Activated CD8-positive, alpha-beta T cell treated with anti-CD3 and anti-CD28 coated beads for 36 hours (primary cell): ENCODE measurements at regions of chr16 and their contacts with region 1.

Region 1: GRCh38 chr16:2023098-2023925 is 3.4 kb upstream of the NHERF2 start:
- DNase-seq: peak; percentile 95
- ATAC-seq: peak; percentile 89
- H3K4me3 Mint-ChIP-seq: peak overlapping the region; percentile 49
- H3K27ac Mint-ChIP-seq: no peak overlapping the region
- H3K4me1 Mint-ChIP-seq: peaks cover 24% of the 10 kb centered on the region
- H3K27me3 Mint-ChIP-seq: peaks cover 29% of the 10 kb centered on the region
- CTCF ChIP-seq: peak; percentile 97

Region 2: GRCh38 chr16:1923299-1924034 is 99.8 kb before region 1 on chr16:
- CTCF ChIA-PET with region 1: no interaction called
- POLR2A ChIA-PET with region 1: no interaction called
- intact Hi-C with region 1: no loop called
- DNase-seq: peak; percentile 43
- ATAC-seq: peak; percentile 43
- H3K4me3 Mint-ChIP-seq: no peak overlapping the region
- H3K27ac Mint-ChIP-seq: no peak overlapping the region
- H3K4me1 Mint-ChIP-seq: no peaks in the 10 kb centered on the region
- H3K27me3 Mint-ChIP-seq: peaks cover 31% of the 10 kb centered on the region
- CTCF ChIP-seq: peak; percentile 49

Region 3: GRCh38 chr16:2047330-2048115 is 24.2 kb after region 1 on chr16 and contains the starts of genes NTHL1 and TSC2:
- CTCF ChIA-PET with region 1: interaction called, 15 read pairs
- POLR2A ChIA-PET with region 1: interaction called, 5 read pairs
- intact Hi-C with region 1: no loop called
- DNase-seq: peak; percentile 97
- ATAC-seq: peak; percentile 97
- H3K4me3 Mint-ChIP-seq: peak within 1 kb of the TSS; percentile 93
- H3K27ac Mint-ChIP-seq: peak within 1 kb of the TSS; percentile 70
- H3K4me1 Mint-ChIP-seq: peaks cover 22% of the 10 kb centered on the region
- H3K27me3 Mint-ChIP-seq: no peaks in the 10 kb centered on the region
- CTCF ChIP-seq: peak; percentile 33
- total RNA-seq, gene NTHL1: 28.2 to 29.8 TPM
- total RNA-seq, gene TSC2: 54.4 to 57.3 TPM

Region 4: GRCh38 chr16:2096853-2097595 is 73.7 kb after region 1 on chr16:
- CTCF ChIA-PET with region 1: no interaction called
- POLR2A ChIA-PET with region 1: no interaction called
- intact Hi-C with region 1: no loop called
- DNase-seq: no peak
- ATAC-seq: no peak
- H3K4me3 Mint-ChIP-seq: no peak overlapping the region
- H3K27ac Mint-ChIP-seq: no peak overlapping the region
- H3K4me1 Mint-ChIP-seq: no peaks in the 10 kb centered on the region
- H3K27me3 Mint-ChIP-seq: no peaks in the 10 kb centered on the region
- CTCF ChIP-seq: no peak

Region 5: GRCh38 chr16:2142942-2143877 is 119.9 kb after region 1 on chr16:
- CTCF ChIA-PET with region 1: interaction called, 46 read pairs
- POLR2A ChIA-PET with region 1: interaction called, 12 read pairs
- intact Hi-C with region 1: loop called (anchors 2 kb)
- DNase-seq: peak; percentile 36
- ATAC-seq: peak; percentile 36
- H3K4me3 Mint-ChIP-seq: no peak overlapping the region
- H3K27ac Mint-ChIP-seq: no peak overlapping the region
- H3K4me1 Mint-ChIP-seq: peaks cover 2% of the 10 kb centered on the region
- H3K27me3 Mint-ChIP-seq: no peaks in the 10 kb centered on the region
- CTCF ChIP-seq: no peak